ENCODE measurements at regions of chr2 and their contacts with region 1.

Region 1: DNA sequence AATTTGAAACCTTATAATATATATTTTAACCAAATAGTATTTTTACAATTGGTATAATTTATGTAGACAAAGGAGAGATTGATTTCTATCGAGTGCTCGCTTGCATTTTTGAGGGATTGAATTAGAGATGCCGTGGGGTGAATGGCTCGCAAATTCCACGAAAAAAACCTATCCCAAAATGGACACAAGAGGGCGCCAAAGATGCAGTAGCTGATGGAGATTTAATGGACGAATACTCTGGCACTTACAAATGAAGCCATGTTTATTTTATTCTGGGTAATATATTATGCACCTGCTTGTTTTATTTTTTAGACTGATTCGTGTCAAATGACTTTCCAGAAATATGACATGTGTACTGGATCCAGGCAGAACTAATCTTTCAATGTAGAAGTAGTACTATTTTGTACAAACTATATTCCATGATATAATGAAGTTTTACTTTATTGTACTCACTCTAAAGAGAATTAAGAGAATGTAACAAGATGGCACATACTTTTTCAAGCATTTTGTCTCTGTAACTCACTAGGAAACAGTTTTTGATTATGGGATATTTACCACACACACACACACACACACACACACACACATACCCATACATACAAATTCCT is 505.4 kb downstream of the PLCL1 start:
- DNase-seq: peak; percentile 56
- H3K27ac ChIP-seq: no peak overlapping the region
- CTCF ChIP-seq: peak; percentile 89

Region 2: DNA sequence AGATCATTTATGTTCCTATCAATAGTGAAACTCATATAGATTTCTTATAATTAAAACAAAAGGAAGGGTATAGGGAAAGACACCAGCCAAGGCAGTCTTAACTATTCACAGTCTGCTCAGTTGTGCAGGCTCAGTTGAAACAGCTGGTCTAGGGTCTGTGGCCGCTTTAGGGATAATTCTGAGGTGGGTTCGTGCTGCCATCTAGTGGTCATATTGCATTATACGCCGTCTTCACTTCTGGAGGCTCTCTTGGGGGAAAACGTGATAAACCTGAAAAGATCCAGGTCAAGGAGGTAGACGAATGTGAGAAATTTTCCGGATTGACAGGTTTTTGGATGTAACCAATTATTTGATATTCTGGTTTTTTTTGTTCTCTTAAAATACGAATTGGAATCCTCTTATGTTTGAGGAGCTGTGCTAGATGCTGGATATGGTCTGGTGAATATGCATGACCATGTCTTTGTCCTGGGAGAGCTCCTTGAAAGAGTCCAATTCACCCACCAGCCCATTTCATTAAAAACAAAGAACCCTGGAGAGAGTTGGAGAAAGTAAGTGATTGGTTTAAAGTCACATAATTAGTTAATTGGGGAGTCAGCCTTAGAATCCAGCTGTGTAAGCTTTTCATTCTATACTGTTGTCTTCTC is 13.0 kb before region 1 on chr2:
- CTCF ChIA-PET with region 1: interaction called, 10 read pairs
- POLR2A ChIA-PET with region 1: interaction called, 5 read pairs
- DNase-seq: peak; percentile 48
- H3K27ac ChIP-seq: no peak overlapping the region
- CTCF ChIP-seq: peak; percentile 83

Measured in RWPE1 (cell line).